GM23248 (cell line): ENCODE measurements at regions of chr6 and their contacts with region 1.

Region 1: GRCh38 chr6:70686548-70687133 is 19.0 kb downstream of the SMAP1 start:
- DNase-seq: peak; percentile 53
- H3K4me3 ChIP-seq: no peak overlapping the region
- H3K27ac ChIP-seq: no peak overlapping the region
- H3K4me1 ChIP-seq: peaks cover 12% of the 10 kb centered on the region; the same call in 1 of the 2 replicates
- H3K27me3 ChIP-seq: no peaks in the 10 kb centered on the region

Region 2: GRCh38 chr6:69732640-69733039 is 954.0 kb before region 1 on chr6:
- in situ Hi-C with region 1: no loop called
- DNase-seq: peak; percentile 19
- H3K4me3 ChIP-seq: no peak overlapping the region
- H3K27ac ChIP-seq: no peak overlapping the region
- H3K4me1 ChIP-seq: no peaks in the 10 kb centered on the region
- H3K27me3 ChIP-seq: no peaks in the 10 kb centered on the region

Region 3: GRCh38 chr6:70221025-70221714 is 465.5 kb before region 1 on chr6:
- in situ Hi-C with region 1: no loop called
- DNase-seq: peak; percentile 37
- H3K4me3 ChIP-seq: no peak overlapping the region
- H3K27ac ChIP-seq: no peak overlapping the region
- H3K4me1 ChIP-seq: no peaks in the 10 kb centered on the region
- H3K27me3 ChIP-seq: peaks cover 17% of the 10 kb centered on the region; the same call in 1 of the 2 replicates

Region 4: GRCh38 chr6:70551566-70551965 is 135.1 kb before region 1 on chr6:
- in situ Hi-C with region 1: loop called (anchors 10 kb)
- DNase-seq: no peak
- H3K4me3 ChIP-seq: no peak overlapping the region
- H3K27ac ChIP-seq: no peak overlapping the region
- H3K4me1 ChIP-seq: no peaks in the 10 kb centered on the region
- H3K27me3 ChIP-seq: no peaks in the 10 kb centered on the region